ENCODE measurements at regions of chr16 and their contacts with region 1.

Region 1: GRCh38 chr16:57084257-57084770 is 8.1 kb upstream of the CPNE2 start:
- DNase-seq: peak; percentile 86
- H3K4me3 Mint-ChIP-seq: no peak overlapping the region
- H3K27ac Mint-ChIP-seq: peak overlapping the region; percentile 73
- H3K4me1 Mint-ChIP-seq: peaks cover 9% of the 10 kb centered on the region
- H3K27me3 Mint-ChIP-seq: no peaks in the 10 kb centered on the region

Region 2: DNA sequence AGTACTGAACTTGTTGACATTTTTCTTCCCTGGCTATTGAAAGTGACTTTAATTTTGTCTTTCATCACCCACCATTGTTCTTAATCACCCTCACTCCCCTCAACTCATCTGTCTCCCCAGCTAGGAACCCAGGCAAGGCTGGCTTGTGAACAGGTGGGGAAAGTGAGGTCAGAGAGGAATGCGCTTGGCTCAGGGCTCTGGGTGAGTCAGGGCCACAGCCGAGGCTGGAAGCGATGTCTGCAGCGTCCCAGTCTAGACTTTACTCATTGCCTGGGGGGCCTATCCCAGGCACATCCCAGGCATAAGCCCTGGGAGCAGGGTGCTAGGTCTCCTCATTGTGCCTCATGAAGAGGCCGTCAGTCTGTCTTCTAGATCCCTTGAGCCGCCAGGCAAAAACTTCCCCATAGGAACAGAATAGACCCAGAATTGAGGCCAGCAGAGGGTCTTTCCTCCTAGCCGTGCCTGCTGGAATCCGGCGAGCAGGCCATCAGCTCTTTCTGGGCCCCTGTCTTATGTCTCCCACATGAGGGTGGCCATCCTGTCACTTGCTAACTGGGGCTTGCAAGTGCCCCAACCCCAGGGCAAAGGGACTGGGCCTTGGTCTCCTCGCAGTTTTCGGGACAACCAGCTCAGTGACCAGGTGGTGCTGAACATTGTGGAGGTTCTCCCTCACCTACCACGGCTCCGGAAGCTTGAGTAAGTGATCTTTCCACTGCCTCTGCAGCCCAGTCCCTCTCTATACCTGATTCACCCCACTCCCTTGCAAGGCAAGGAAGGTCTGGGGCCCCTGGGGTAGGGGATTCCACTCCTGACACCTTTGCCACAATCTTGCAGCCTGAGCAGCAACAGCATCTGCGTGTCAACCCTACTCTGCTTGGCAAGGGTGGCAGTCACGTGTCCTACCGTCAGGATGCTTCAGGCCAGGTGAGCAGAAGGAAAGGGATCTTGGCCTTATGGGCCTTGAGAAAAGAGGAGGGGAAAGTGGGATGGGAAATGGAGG is 54.9 kb before region 1 on chr16:
- CTCF ChIA-PET with region 1: no interaction called
- intact Hi-C with region 1: no loop called
- DNase-seq: no peak
- H3K4me3 Mint-ChIP-seq: no peak overlapping the region
- H3K27ac Mint-ChIP-seq: peak overlapping the region; percentile 55
- H3K4me1 Mint-ChIP-seq: peaks cover 65% of the 10 kb centered on the region
- H3K27me3 Mint-ChIP-seq: no peaks in the 10 kb centered on the region

Region 3: DNA sequence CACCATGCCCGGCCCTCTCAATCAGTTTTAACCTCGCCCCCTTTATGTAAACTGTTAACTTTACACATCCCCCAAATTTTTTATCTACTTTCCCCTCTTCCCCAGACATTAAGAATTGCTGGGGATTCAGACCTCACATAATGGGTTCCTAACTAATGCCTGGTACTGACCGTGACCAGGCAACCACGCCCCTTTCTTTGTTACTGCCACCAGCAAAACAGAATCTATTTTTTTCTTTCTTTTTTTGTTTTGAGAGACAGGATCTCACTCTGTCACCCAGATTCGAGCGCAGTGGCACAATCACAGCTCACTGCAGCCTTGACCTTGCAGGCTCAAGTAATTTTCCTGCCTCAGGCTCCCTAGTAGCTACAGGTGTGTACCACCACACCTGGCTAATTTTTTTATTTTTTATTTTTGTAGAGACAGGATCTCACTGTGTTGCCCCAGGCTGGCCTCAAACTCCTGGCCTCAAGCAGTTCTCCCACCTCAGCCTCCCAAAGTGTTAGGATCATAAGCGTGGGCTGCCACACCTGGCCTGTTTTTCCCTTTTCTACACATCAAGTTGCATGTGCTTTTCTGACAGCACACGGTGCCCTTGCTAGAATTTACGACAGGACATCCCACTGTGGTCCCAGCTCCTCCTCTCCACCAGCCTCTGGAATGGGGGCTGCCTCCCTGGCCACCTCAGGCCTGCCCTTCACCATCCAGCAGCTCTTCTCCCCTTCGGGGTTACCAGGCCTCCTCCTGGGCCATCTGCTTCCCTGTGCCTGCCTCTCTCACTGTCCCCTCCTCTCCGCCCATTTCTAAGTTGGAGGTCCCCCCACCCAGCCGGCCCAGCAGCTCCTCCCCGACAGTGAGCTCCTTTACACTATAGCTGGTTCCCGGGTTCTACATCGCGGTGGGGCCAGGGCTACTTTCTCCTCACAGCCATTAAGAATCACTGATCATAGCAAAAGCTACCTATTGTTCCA is 18.9 kb after region 1 on chr16:
- CTCF ChIA-PET with region 1: interaction called, 13 read pairs
- intact Hi-C with region 1: no loop called
- DNase-seq: no peak
- H3K4me3 Mint-ChIP-seq: no peak overlapping the region
- H3K27ac Mint-ChIP-seq: no peak overlapping the region
- H3K4me1 Mint-ChIP-seq: peaks cover 12% of the 10 kb centered on the region
- H3K27me3 Mint-ChIP-seq: no peaks in the 10 kb centered on the region

Region 4: GRCh38 chr16:57152096-57153093 is 68.1 kb after region 1 on chr16:
- CTCF ChIA-PET with region 1: interaction called, 17 read pairs
- intact Hi-C with region 1: no loop called
- DNase-seq: no peak
- H3K4me3 Mint-ChIP-seq: no peak overlapping the region
- H3K27ac Mint-ChIP-seq: no peak overlapping the region
- H3K4me1 Mint-ChIP-seq: peaks cover 23% of the 10 kb centered on the region
- H3K27me3 Mint-ChIP-seq: no peaks in the 10 kb centered on the region

Region 5: GRCh38 chr16:57167953-57168352 is 83.6 kb after region 1 on chr16:
- CTCF ChIA-PET with region 1: interaction called, 17 read pairs
- intact Hi-C with region 1: loop called (anchors 1 kb)
- DNase-seq: no peak
- H3K4me3 Mint-ChIP-seq: no peak overlapping the region
- H3K27ac Mint-ChIP-seq: no peak overlapping the region
- H3K4me1 Mint-ChIP-seq: peaks cover 7% of the 10 kb centered on the region
- H3K27me3 Mint-ChIP-seq: no peaks in the 10 kb centered on the region

Region 6: GRCh38 chr16:57244767-57245471 is 160.6 kb after region 1 on chr16 and contains the start of gene ARL2BP:
- CTCF ChIA-PET with region 1: interaction called, 3 read pairs
- intact Hi-C with region 1: loop called (anchors 2 kb)
- DNase-seq: peak; percentile 98
- H3K4me3 Mint-ChIP-seq: peak within 1 kb of the TSS; percentile 93
- H3K27ac Mint-ChIP-seq: peak within 1 kb of the TSS; percentile 91
- H3K4me1 Mint-ChIP-seq: peaks cover 16% of the 10 kb centered on the region
- H3K27me3 Mint-ChIP-seq: no peaks in the 10 kb centered on the region
- total RNA-seq, gene ARL2BP: 11.0 to 11.2 TPM

Region 7: GRCh38 chr16:57500578-57501111 is 416.3 kb after region 1 on chr16:
- CTCF ChIA-PET with region 1: no interaction called
- intact Hi-C with region 1: no loop called
- DNase-seq: peak; percentile 72
- H3K4me3 Mint-ChIP-seq: no peak overlapping the region
- H3K27ac Mint-ChIP-seq: no peak overlapping the region
- H3K4me1 Mint-ChIP-seq: peaks cover 14% of the 10 kb centered on the region
- H3K27me3 Mint-ChIP-seq: no peaks in the 10 kb centered on the region